Naive thymus-derived CD4-positive, alpha-beta T cell (primary cell): ENCODE measurements at regions of chr5 and their contacts with region 1.

Region 1: GRCh38 chr5:134917070-134917815 is 12.3 kb downstream of the PCBD2 start:
- DNase-seq: no peak
- ATAC-seq: no peak
- H3K4me3 ChIP-seq: no peak overlapping the region
- H3K4me3 Mint-ChIP-seq: no peak overlapping the region
- H3K27ac ChIP-seq: no peak overlapping the region
- H3K27ac Mint-ChIP-seq: peak overlapping the region in 1 of 9 donors; percentile 9
- H3K4me1 ChIP-seq: no peaks in the 10 kb centered on the region
- H3K4me1 Mint-ChIP-seq: peaks cover 6 to 26% (median 10%) of the 10 kb centered on the region in 7 donors
- H3K27me3 ChIP-seq: no peaks in the 10 kb centered on the region
- H3K27me3 Mint-ChIP-seq: no peaks in the 10 kb centered on the region

Region 2: DNA sequence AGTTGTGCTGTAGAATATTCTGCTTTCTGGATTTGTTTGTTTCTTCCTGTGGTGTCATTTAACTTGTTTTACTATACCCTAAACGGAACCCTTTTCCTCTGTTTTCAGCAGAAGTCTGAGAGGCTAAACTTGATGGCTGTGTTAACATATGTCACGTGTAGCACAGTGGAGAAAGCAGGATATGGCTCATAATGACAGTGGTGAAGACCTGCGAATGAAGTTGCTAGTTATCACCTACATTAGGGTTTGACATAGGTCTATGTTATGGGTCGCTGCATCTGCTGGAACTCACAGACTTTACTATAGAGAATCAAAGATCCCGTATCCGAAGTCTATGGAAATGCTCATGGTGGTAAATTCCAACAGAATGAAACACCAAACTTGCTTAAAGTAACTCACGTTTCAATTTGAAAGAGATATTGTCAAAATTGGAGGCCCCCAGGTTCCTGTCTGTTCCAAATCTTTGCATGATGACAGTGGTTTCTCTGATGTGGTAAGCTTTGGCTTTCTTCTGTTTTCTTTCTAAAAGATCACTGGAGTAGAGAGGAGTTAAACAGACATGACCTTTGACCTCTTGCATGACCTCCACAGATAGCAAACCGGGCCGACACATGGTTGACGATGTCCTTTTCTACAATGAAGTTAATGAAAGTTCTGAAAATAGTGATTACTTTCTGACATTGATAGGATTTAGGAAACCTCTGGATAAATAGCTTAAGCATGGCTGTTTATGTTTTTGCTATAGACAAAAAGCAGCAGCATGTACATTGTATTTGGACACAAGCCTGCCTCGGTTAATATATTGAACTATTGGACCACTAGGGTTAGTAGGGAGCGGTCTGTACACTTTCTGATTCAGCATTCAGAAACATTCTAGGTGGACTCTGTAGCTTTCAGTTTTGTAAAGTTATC is 47.4 kb after region 1 on chr5:
- CTCF ChIA-PET with region 1: no interaction called
- POLR2A ChIA-PET with region 1: no interaction called
- intact Hi-C with region 1: loop called in 1 of 2 experiments (anchors 2 kb)
- DNase-seq: peak in 7 of 9 donors; percentile 68 to 84 (median 79)
- ATAC-seq: peak; percentile 86
- H3K4me3 ChIP-seq: no peak overlapping the region
- H3K4me3 Mint-ChIP-seq: peak overlapping the region in 9 of 10 donors; percentile 37 to 78 (median 67)
- H3K27ac ChIP-seq: peak overlapping the region; percentile 42
- H3K27ac Mint-ChIP-seq: peak overlapping the region; percentile 85 to 95 (median 94)
- H3K4me1 ChIP-seq: peaks cover 0 to 28% of the 10 kb centered on the region in 2 donors
- H3K4me1 Mint-ChIP-seq: peaks cover 13 to 39% (median 28%) of the 10 kb centered on the region in 7 donors
- H3K27me3 ChIP-seq: no peaks in the 10 kb centered on the region
- H3K27me3 Mint-ChIP-seq: no peaks in the 10 kb centered on the region